ENCODE measurements at regions of chr19 and their contacts with region 1.

Region 1: GRCh38 chr19:11339254-11340098 is at the start of gene RAB3D:
- DNase-seq: peak; percentile 95 to 98 (median 98)
- ATAC-seq: peak; percentile 96
- H3K4me3 ChIP-seq: peak within 1 kb of the TSS; percentile 83
- H3K27ac ChIP-seq: peak within 1 kb of the TSS; percentile 57
- H3K4me1 ChIP-seq: peaks cover 4% of the 10 kb centered on the region
- H3K27me3 ChIP-seq: no peaks in the 10 kb centered on the region
- total RNA-seq, gene RAB3D: 12.2 to 12.7 (median 12.3) TPM

Region 2: DNA sequence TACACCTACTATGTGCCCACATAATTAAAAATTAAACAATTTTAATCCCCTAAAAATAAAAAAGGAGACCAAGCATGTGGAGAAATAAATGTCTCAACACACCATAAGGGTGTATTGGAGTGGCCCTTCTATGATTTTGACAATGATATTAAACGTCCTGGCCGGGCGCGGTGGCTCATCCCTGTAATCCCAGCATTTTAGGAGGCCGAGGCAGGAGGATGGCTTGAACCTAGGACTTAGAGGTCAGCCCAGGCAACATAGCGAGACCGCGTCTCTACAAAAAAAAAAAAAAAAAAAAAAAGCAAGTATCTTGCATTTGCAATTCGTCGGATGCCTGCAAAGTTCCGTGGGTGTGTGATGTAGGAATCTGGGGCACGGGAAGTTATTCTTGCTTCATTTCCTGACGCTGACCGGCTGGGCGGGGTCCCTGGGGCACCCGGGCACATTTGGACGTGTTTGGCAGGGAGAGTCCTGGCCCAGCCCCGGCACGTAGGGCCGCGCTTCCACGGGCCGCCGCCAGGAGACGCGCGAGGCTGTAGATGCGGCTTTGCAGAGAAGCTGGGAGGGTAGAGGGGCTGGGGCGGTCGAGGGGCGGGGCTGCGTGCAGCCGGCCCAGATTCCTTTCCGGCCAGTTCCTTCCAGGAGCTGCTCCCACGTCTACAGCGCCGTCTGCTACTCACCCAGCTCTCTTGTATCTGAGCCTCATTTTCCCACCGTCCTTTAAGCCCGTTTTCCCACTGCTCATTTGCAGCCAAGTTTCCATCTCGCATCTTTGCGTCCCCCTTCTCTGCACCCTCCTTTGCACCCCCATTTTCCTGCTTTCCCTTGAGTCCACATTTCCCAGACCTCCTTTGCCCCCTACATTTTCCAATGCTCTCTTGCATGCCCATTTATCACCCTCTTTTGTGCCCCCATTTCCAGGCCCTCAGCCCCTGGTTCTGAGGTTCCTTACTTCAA is 45.8 kb before region 1 on chr19:
- intact Hi-C with region 1: loop called in 1 of 4 experiments (anchors 5 kb)
- DNase-seq: peak; percentile 97 to 99 (median 99)
- ATAC-seq: peak; percentile 97
- H3K4me3 ChIP-seq: peak overlapping the region; percentile 21
- H3K27ac ChIP-seq: peak overlapping the region; percentile 77
- H3K4me1 ChIP-seq: peaks cover 2% of the 10 kb centered on the region
- H3K27me3 ChIP-seq: no peaks in the 10 kb centered on the region

Region 3: DNA sequence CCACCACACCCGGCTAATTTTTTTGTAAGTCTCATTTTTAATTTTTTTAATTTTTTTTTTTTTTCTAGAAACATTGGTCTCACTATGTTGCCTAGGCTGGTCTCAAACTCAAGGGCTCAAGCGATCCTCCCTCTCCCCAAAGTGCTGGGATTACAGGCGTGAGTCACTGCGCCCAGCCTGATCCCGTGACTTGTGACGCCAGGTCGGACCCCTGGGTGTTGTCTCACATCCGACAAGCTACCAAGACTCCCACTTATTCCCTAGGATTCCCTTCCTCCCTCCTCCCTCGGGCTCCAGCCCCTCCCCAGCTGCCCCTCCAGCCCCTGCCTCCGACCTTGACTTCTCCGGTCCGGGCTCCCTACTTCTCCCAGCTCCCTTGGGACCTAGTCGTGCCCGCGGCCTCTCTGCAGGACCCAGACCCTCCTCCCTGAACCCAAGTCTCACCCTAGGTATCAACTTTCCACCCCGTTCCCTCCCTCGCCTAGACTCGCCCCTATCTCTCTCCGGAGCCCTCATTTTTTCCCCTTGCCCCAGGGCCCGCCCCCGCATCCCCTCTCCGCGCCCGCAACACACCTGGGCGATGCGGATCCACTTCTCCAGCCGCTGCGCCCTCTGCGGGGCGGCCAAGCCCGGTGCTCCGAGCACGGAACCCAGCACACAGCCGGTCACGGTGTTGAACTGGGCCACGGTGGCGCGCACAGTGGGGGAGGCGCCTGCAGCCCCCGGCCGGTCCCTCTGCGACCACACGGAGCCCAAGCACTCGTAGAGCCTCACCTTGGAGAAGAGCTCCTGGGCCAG is 66.6 kb after region 1 on chr19:
- intact Hi-C with region 1: no loop called
- DNase-seq: peak in 2 of 3 donors; percentile 59 to 63
- ATAC-seq: peak; percentile 42 to 56
- H3K4me3 ChIP-seq: no peak overlapping the region
- H3K27ac ChIP-seq: no peak overlapping the region
- H3K4me1 ChIP-seq: no peaks in the 10 kb centered on the region
- H3K27me3 ChIP-seq: no peaks in the 10 kb centered on the region

Measured in right cardiac atrium (tissue), 5 donors.